ENCODE measurements at regions of chr15 and their contacts with region 1.

Region 1: DNA sequence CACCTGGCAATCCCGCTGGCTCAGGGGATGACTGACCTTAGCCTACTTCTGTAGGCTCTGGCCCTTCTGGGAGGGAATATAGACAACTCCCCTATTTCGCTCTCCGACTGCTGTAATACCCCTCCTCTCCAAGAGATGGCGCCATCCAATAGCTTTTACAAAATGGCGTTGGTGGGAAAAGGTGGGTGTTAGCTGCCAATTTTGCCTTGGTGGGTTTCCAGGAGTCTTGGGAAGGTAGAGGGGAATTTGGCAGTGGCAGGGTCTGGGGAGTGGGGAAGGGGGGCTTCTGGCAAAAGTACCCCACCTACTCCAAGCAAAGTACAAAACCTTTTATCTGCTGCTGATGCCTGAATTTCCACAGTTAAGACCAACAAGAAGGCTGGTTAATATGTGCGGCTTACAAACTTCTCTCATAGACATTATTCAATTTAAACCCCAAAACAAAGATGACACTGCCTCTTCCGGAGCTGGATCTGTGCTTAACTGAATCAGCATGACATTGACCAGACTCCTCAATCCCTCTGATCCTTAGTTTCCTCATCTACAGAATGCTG is 62.1 kb downstream of the RASGRF1 start:
- DNase-seq: peak; percentile 20
- H3K4me3 Mint-ChIP-seq: no peak overlapping the region
- H3K27ac Mint-ChIP-seq: no peak overlapping the region
- H3K4me1 Mint-ChIP-seq: no peaks in the 10 kb centered on the region
- H3K27me3 Mint-ChIP-seq: no peaks in the 10 kb centered on the region

Region 2: GRCh38 chr15:78992416-78993256 is 35.9 kb before region 1 on chr15:
- intact Hi-C with region 1: no loop called
- DNase-seq: no peak
- H3K4me3 Mint-ChIP-seq: no peak overlapping the region
- H3K27ac Mint-ChIP-seq: no peak overlapping the region
- H3K4me1 Mint-ChIP-seq: peaks cover 6% of the 10 kb centered on the region
- H3K27me3 Mint-ChIP-seq: peaks cover 8% of the 10 kb centered on the region

Region 3: DNA sequence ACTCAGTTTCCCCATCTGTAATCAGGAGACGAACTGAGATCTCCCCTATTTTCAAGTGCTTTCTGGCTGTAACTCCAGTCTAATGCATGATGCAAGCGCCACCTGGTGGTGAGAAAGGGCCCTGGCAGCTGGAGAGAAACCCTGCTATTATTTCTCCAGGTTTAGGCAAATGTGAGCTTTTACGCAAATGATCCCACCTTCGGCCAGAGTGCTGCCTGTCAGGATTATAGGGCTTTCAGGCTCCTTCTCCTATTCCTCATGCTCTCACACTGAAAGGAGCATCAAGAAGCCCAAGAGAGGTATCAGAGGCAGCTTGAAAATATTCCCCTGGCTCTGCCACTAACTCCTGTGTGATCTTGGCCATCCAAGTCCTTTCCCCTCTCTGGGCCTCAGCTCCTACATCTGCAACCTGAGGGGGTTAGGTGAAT is 156.0 kb after region 1 on chr15:
- intact Hi-C with region 1: loop called (anchors 1 kb)
- DNase-seq: peak; percentile 40
- H3K4me3 Mint-ChIP-seq: no peak overlapping the region
- H3K27ac Mint-ChIP-seq: no peak overlapping the region
- H3K4me1 Mint-ChIP-seq: no peaks in the 10 kb centered on the region
- H3K27me3 Mint-ChIP-seq: no peaks in the 10 kb centered on the region

Measured in activated T-helper 2 cell treated with anti-CD3 and anti-CD28 coated beads, Interferon-gamma antibody, Interleukin-2, Interleukin-4, amounts not matched to agents 10 μg/mL and 5 μg/mL and 100 μg/mL, durations not matched to agents 14 hours and 24 hours and 36 hours (primary cell).